PC-3 (cell line): ENCODE measurements at regions of chr12 and their contacts with region 1.

Region 1: GRCh38 chr12:91778938-91779400 is 366.7 kb downstream of the BTG1 start:
- DNase-seq: peak; percentile 97
- ATAC-seq: peak; percentile 87
- H3K4me3 ChIP-seq: peak overlapping the region; percentile 38
- H3K27ac ChIP-seq: peak overlapping the region; percentile 99
- H3K4me1 ChIP-seq: peaks cover 47% of the 10 kb centered on the region
- H3K27me3 ChIP-seq: no peaks in the 10 kb centered on the region
- CTCF ChIP-seq: no peak

Region 2: GRCh38 chr12:91493308-91493707 is 285.7 kb before region 1 on chr12:
- CTCF ChIA-PET with region 1: no interaction called
- POLR2A ChIA-PET with region 1: no interaction called
- intact Hi-C with region 1: loop called (anchors 10 kb)
- DNase-seq: peak; percentile 37
- ATAC-seq: no peak
- H3K4me3 ChIP-seq: no peak overlapping the region
- H3K27ac ChIP-seq: no peak overlapping the region
- H3K4me1 ChIP-seq: peaks cover 21% of the 10 kb centered on the region
- H3K27me3 ChIP-seq: no peaks in the 10 kb centered on the region
- CTCF ChIP-seq: no peak

Region 3: DNA sequence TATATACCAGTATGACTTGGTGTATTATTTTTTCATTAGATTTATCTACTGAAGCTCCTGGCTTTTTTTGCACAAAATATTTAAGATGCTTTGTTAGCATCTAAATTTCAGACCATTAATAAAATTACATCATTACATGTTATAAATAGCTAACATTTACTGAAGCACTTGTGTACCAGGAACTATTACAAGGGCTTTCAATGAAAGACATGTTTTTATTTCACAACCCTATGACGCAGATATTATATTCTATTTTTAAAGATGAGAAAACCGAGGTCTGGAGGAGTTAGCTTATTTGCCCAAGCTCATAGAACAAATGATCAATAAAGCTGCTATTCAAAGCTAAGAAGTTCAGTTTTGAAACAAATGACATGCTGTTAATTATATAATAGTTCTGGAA is 175.9 kb before region 1 on chr12:
- CTCF ChIA-PET with region 1: no interaction called
- POLR2A ChIA-PET with region 1: no interaction called
- intact Hi-C with region 1: no loop called
- DNase-seq: no peak
- ATAC-seq: no peak
- H3K4me3 ChIP-seq: no peak overlapping the region
- H3K27ac ChIP-seq: no peak overlapping the region
- H3K4me1 ChIP-seq: no peaks in the 10 kb centered on the region
- H3K27me3 ChIP-seq: no peaks in the 10 kb centered on the region
- CTCF ChIP-seq: no peak

Region 4: DNA sequence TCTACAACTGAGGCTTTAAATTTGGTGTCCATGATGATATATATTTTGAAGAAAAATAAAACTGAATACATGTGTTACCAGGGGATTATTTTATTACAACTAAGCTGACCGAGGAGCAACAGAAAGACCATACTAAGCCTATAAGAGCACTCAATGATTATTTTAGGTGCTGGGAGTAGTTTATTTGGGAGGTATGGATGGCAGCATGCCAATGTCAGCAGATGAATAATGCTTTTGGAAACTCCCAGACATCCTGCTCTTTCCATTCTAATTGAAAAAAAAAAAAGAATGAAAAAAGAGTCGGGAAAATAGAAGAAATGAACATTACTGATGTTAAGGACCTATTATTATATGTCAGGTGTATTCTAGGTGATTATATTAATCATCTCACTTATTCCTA is 74.5 kb before region 1 on chr12:
- CTCF ChIA-PET with region 1: no interaction called
- POLR2A ChIA-PET with region 1: no interaction called
- intact Hi-C with region 1: loop called (anchors 10 kb)
- DNase-seq: peak; percentile 81
- ATAC-seq: peak; percentile 83
- H3K4me3 ChIP-seq: no peak overlapping the region
- H3K27ac ChIP-seq: peak overlapping the region; percentile 45
- H3K4me1 ChIP-seq: peaks cover 24% of the 10 kb centered on the region
- H3K27me3 ChIP-seq: no peaks in the 10 kb centered on the region
- CTCF ChIP-seq: no peak